B cell (primary cell): ENCODE measurements at regions of chr17 and their contacts with region 1.

Region 1: DNA sequence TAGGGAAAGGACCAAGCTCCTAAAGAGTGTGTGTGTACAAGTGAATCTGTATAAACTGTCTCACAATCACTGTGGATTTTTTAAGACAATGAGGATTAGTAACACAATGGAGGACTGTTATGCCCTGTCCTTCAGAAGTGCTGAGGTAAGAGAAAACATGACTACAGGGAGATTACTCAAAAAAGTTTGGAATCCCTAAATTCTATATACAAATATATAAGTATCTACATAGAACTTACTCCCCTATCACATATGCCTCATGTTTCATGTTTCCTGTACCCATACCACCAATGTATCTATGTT is 81.9 kb downstream of the STH start:
- DNase-seq: no peak
- ATAC-seq: no peak
- H3K4me3 ChIP-seq: no peak overlapping the region
- H3K4me3 Mint-ChIP-seq: no peak overlapping the region
- H3K27ac ChIP-seq: no peak overlapping the region
- H3K27ac Mint-ChIP-seq: no peak overlapping the region
- H3K4me1 ChIP-seq: no peaks in the 10 kb centered on the region
- H3K4me1 Mint-ChIP-seq: peaks cover 13% of the 10 kb centered on the region
- H3K27me3 ChIP-seq: no peaks in the 10 kb centered on the region
- H3K27me3 Mint-ChIP-seq: no peaks in the 10 kb centered on the region
- CTCF ChIP-seq: no peak

Region 2: GRCh38 chr17:45852535-45853297 is 228.3 kb before region 1 on chr17:
- CTCF ChIA-PET with region 1: no interaction called
- POLR2A ChIA-PET with region 1: no interaction called
- intact Hi-C with region 1: no loop called
- DNase-seq: peak; percentile 65
- ATAC-seq: no peak
- H3K4me3 ChIP-seq: no peak overlapping the region
- H3K4me3 Mint-ChIP-seq: no peak overlapping the region
- H3K27ac ChIP-seq: no peak overlapping the region
- H3K27ac Mint-ChIP-seq: no peak overlapping the region
- H3K4me1 ChIP-seq: peaks cover 0 to 2% of the 10 kb centered on the region in 2 donors
- H3K4me1 Mint-ChIP-seq: no peaks in the 10 kb centered on the region
- H3K27me3 ChIP-seq: peaks cover 0 to 21% (median 3%) of the 10 kb centered on the region in 4 experiments
- H3K27me3 Mint-ChIP-seq: peaks cover 32% of the 10 kb centered on the region
- CTCF ChIP-seq: peak; percentile 90

Region 3: GRCh38 chr17:46061435-46061834 is 19.5 kb before region 1 on chr17:
- CTCF ChIA-PET with region 1: interaction called, 4 read pairs
- POLR2A ChIA-PET with region 1: interaction called, 6 read pairs
- intact Hi-C with region 1: loop called (anchors 2 kb)
- DNase-seq: peak; percentile 25
- ATAC-seq: no peak
- H3K4me3 ChIP-seq: no peak overlapping the region
- H3K4me3 Mint-ChIP-seq: no peak overlapping the region
- H3K27ac ChIP-seq: no peak overlapping the region
- H3K27ac Mint-ChIP-seq: no peak overlapping the region
- H3K4me1 ChIP-seq: no peaks in the 10 kb centered on the region
- H3K4me1 Mint-ChIP-seq: no peaks in the 10 kb centered on the region
- H3K27me3 ChIP-seq: no peaks in the 10 kb centered on the region
- H3K27me3 Mint-ChIP-seq: no peaks in the 10 kb centered on the region
- CTCF ChIP-seq: peak; percentile 44